Mammary epithelial cell (primary cell): ENCODE measurements at regions of chr2 and their contacts with region 1.

Region 1: DNA sequence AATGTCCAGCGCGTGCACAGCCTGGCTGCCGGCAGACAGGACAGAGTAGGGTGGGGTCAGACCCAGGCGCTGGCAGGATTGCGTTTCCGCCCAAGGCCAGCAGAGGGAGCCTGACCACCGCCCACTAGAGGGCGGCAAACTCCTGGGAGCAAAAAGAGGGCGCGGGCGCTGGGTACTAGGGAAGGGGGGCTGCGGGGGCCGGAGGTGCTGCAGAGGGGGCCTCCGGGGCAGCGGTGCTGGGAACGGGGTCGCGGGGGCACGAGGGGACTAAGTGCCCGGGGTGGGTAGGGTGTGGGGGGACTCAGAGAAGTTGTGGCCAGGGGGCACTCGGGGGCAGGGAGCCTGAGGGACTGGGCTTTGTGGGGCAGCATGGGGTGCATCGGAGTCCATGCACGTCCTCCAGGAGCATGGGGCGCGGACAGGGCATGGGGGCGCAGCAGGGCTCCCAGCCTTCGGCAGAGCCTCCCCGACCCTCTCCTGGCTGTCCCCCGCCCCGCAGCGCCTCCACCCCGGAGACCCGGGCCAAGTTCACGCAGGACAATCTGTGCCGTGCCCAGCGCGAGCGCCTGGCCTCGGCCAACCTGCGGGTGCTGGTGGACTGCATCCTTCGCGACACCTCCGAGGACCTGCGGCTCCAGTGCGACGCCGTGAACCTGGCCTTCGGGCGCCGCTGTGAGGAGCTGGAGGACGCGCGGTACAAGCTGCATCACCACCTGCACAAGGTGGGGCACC is 3.2 kb downstream of the TEKT4 start:
- DNase-seq: no peak
- H3K4me3 ChIP-seq: no peak overlapping the region
- H3K27ac ChIP-seq: no peak overlapping the region
- H3K4me1 ChIP-seq: no peaks in the 10 kb centered on the region
- H3K27me3 ChIP-seq: no peaks in the 10 kb centered on the region
- CTCF ChIP-seq: peak; percentile 70 to 97

Region 2: DNA sequence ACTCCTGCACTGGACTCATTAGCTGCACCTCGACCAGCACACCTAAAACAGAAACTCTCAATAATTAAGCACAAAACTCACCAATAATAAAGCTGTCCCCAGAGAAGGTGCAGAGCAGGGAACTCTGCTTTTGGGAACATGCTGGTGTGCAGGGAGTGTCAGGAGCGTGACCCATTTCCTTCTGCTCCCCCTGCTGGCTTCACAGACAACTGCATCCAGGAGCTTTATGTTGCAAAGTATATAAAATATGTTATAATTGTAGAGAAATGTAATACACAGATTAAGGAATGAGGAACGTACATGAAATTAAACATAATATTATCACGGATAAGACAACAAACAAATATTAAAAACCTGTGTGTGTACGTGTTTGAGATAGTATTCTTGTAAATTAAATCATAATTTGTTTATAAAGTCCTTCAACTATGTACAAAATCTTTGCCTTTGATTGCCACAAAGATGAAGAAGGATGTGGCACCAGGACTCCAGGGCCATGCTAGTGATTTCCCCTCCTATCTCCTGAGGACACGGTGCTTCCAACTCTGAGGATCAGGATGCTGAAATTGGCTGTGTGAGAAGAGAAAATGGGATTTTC is 82.5 kb after region 1 on chr2:
- CTCF ChIA-PET with region 1: no interaction called
- dilution Hi-C with region 1: no loop called
- in situ Hi-C with region 1: no loop called
- intact Hi-C with region 1: loop called (anchors 1 kb)
- DNase-seq: peak; percentile 19
- H3K4me3 ChIP-seq: no peak overlapping the region
- H3K27ac ChIP-seq: no peak overlapping the region
- H3K4me1 ChIP-seq: no peaks in the 10 kb centered on the region
- H3K27me3 ChIP-seq: no peaks in the 10 kb centered on the region
- CTCF ChIP-seq: peak; percentile 90 to 94

Region 3: GRCh38 chr2:95143838-95144237 is 269.4 kb after region 1 on chr2:
- CTCF ChIA-PET with region 1: no interaction called
- dilution Hi-C with region 1: no loop called
- in situ Hi-C with region 1: no loop called
- intact Hi-C with region 1: no loop called
- DNase-seq: no peak
- H3K4me3 ChIP-seq: no peak overlapping the region
- H3K27ac ChIP-seq: no peak overlapping the region
- H3K4me1 ChIP-seq: no peaks in the 10 kb centered on the region
- H3K27me3 ChIP-seq: no peaks in the 10 kb centered on the region
- CTCF ChIP-seq: no peak

Region 4: DNA sequence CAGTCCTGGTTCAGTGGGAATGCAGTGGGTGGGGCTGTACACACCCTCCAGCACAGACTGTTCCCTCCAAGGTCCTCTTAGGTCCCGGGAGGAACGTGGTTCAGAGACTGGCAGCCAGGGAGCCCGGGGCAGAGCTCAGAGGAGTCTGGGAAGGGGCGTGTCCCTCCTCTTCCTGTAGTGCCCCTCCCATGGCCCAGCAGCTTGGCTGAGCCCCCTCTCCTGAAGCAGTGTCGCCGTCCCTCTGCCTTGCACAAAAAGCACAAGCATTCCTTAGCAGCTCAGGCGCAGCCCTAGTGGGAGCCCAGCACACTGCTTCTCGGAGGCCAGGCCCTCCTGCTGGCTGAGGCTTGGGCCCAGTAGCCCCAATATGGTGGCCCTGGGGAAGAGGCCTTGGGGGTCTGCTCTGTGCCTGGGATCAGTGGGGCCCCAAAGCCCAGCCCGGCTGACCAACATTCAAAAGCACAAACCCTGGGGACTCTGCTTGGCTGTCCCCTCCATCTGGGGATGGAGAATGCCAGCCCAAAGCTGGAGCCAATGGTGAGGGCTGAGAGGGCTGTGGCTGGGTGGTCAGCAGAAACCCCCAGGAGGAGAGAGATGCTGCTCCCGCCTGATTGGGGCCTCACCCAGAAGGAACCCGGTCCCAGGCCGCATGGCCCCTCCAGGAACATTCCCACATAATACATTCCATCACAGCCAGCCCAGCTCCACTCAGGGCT is 510.6 kb after region 1 on chr2:
- CTCF ChIA-PET with region 1: no interaction called
- dilution Hi-C with region 1: no loop called
- in situ Hi-C with region 1: no loop called
- intact Hi-C with region 1: no loop called
- DNase-seq: no peak
- H3K4me3 ChIP-seq: no peak overlapping the region
- H3K27ac ChIP-seq: no peak overlapping the region
- H3K4me1 ChIP-seq: no peaks in the 10 kb centered on the region
- H3K27me3 ChIP-seq: no peaks in the 10 kb centered on the region
- CTCF ChIP-seq: no peak